Activated T-helper 2 cell treated with anti-CD3 and anti-CD28 coated beads, Interferon-gamma antibody, Interleukin-2, Interleukin-4, amounts not matched to agents 10 μg/mL and 5 μg/mL and 100 μg/mL, durations not matched to agents 14 hours and 24 hours and 36 hours (primary cell): ENCODE measurements at regions of chr10 and their contacts with region 1.

Region 1: GRCh38 chr10:62992145-62992721 is 140.9 kb upstream of the NRBF2 start:
- DNase-seq: no peak
- H3K4me3 Mint-ChIP-seq: peak overlapping the region; percentile 50
- H3K27ac Mint-ChIP-seq: peak overlapping the region; percentile 89
- H3K4me1 Mint-ChIP-seq: peaks cover 66% of the 10 kb centered on the region
- H3K27me3 Mint-ChIP-seq: no peaks in the 10 kb centered on the region

Region 2: GRCh38 chr10:62637249-62638061 is 354.8 kb before region 1 on chr10:
- intact Hi-C with region 1: loop called (anchors 1 kb)
- DNase-seq: peak; percentile 75
- H3K4me3 Mint-ChIP-seq: no peak overlapping the region
- H3K27ac Mint-ChIP-seq: no peak overlapping the region
- H3K4me1 Mint-ChIP-seq: peaks cover 37% of the 10 kb centered on the region
- H3K27me3 Mint-ChIP-seq: no peaks in the 10 kb centered on the region

Region 3: GRCh38 chr10:62732841-62733653 is 259.2 kb before region 1 on chr10:
- intact Hi-C with region 1: loop called (anchors 2 kb)
- DNase-seq: peak; percentile 51
- H3K4me3 Mint-ChIP-seq: peak overlapping the region; percentile 56
- H3K27ac Mint-ChIP-seq: no peak overlapping the region
- H3K4me1 Mint-ChIP-seq: peaks cover 23% of the 10 kb centered on the region
- H3K27me3 Mint-ChIP-seq: no peaks in the 10 kb centered on the region

Region 4: DNA sequence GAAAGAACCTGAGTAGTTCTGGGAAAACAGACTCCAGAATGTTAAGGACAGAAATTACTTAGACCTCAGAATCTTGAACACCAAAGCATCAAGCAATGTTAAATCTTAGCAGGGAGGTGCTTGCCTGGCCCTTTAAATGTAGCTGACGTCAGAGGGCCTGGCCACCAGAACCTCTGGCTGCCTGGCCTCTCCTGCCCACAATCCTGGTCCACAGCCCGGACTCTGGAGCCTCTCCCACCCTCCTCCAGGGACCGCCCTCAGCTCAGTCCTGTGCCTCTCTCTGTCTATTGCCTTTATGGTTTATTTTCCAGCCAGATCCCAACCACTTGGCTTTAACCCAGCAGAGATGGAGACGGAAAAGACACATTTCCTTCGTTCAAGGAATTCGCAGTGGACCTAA is 133.9 kb before region 1 on chr10:
- intact Hi-C with region 1: loop called (anchors 1 kb)
- DNase-seq: no peak
- H3K4me3 Mint-ChIP-seq: no peak overlapping the region
- H3K27ac Mint-ChIP-seq: no peak overlapping the region
- H3K4me1 Mint-ChIP-seq: peaks cover 78% of the 10 kb centered on the region
- H3K27me3 Mint-ChIP-seq: no peaks in the 10 kb centered on the region

Region 5: DNA sequence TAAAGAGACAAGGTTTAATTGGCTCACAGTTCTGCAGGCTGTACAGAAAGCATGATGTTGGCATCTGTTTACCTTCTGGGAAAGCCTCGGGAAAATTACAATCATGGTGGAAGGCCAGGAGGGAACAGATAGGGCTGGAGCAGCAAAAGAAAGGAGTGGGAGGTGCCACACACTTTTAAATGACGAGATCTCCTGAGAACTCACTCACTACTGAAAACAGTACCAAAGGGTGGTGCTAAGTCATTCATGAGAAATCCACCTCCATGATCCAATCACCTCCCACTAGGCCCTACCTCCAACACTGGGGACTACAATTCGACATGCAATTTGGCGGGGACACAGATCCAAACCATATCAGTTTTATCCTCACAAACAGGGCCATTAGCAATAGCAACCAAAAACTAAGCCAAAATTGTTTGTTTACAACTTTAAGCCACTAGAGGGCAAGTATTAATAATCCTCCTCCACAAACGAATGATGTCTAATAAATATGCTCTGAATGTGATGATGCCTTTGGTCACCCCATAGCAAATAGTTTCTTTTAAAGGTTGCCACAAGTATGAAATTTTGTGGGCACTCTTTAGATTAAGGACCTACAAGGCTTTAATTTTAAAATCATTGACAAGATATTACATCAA is 11.7 kb after region 1 on chr10:
- intact Hi-C with region 1: loop called (anchors 1 kb)
- DNase-seq: no peak
- H3K4me3 Mint-ChIP-seq: no peak overlapping the region
- H3K27ac Mint-ChIP-seq: no peak overlapping the region
- H3K4me1 Mint-ChIP-seq: peaks cover 33% of the 10 kb centered on the region
- H3K27me3 Mint-ChIP-seq: no peaks in the 10 kb centered on the region

Region 6: GRCh38 chr10:63083904-63084689 is 91.9 kb after region 1 on chr10:
- intact Hi-C with region 1: loop called (anchors 1 kb)
- DNase-seq: peak; percentile 16
- H3K4me3 Mint-ChIP-seq: no peak overlapping the region
- H3K27ac Mint-ChIP-seq: no peak overlapping the region
- H3K4me1 Mint-ChIP-seq: peaks cover 12% of the 10 kb centered on the region
- H3K27me3 Mint-ChIP-seq: peaks cover 23% of the 10 kb centered on the region

Region 7: GRCh38 chr10:63707254-63707910 is 715.1 kb after region 1 on chr10:
- intact Hi-C with region 1: loop called (anchors 10 kb)
- DNase-seq: no peak
- H3K4me3 Mint-ChIP-seq: no peak overlapping the region
- H3K27ac Mint-ChIP-seq: peak overlapping the region; percentile 37
- H3K4me1 Mint-ChIP-seq: peaks cover 26% of the 10 kb centered on the region
- H3K27me3 Mint-ChIP-seq: peaks cover 2% of the 10 kb centered on the region